ENCODE measurements at regions of chr1 and their contacts with region 1.

Region 1: GRCh38 chr1:94934551-94934950 is 7.6 kb upstream of the CNN3 start:
- DNase-seq: no peak
- H3K4me3 ChIP-seq: no peak overlapping the region
- H3K4me3 Mint-ChIP-seq: no peak overlapping the region
- H3K27ac ChIP-seq: no peak overlapping the region
- H3K27ac Mint-ChIP-seq: no peak overlapping the region
- H3K4me1 ChIP-seq: no peaks in the 10 kb centered on the region
- H3K4me1 Mint-ChIP-seq: no peaks in the 10 kb centered on the region
- H3K27me3 ChIP-seq: peaks cover under 1 to 4% of the 10 kb centered on the region in 2 donors
- H3K27me3 Mint-ChIP-seq: peaks cover 8 to 17% (median 11%) of the 10 kb centered on the region in 3 donors
- CTCF ChIP-seq: no peak

Region 2: DNA sequence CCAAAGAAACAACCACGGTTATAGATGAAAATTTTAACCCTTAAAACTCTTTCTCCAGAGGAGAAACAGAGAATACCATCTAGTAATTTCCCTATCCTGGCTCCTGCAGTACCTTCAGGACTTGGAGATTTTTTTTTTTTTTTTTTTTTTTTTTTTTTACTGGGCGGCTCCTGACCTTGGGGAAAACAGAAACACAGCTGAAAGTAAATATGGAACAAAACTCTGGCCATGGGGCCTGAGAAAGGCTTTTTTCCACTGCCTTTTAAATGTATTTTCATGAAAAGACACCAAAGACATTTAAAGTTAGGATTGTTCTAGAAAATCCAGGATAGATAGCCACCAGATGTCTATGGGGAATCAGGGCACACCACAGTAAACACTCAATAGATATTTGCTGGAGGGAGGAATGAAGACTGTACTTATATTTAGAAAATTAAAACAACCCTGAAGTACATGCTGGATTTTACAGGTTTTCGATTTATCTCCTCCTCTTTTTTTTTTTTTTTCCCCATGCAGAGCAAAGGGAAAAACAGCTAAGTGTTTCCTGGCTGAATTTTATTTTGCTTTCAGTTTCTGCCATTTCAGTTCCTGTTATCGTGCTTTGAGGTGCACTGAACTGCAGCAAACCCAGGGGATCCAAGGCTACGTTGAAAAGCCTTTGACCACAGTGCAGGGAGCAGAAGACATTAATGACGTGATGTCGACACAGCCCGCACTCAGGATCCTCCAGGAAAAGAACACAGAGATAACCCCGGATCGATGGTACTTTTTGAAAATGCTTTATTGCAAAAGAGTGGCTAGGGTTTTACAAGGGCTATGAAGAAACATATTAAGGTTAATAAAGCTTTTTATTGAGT is 28.1 kb after region 1 on chr1:
- intact Hi-C with region 1: loop called in 1 of 2 experiments (anchors 2 kb)
- DNase-seq: peak; percentile 20 to 56 (median 46)
- H3K4me3 ChIP-seq: peak overlapping the region; percentile 35 to 73 (median 67)
- H3K4me3 Mint-ChIP-seq: peak overlapping the region; percentile 76 to 96
- H3K27ac ChIP-seq: peak overlapping the region in 1 of 2 donors; percentile 79
- H3K27ac Mint-ChIP-seq: peak overlapping the region; percentile 8 to 95 (median 83)
- H3K4me1 ChIP-seq: peaks cover 11 to 13% of the 10 kb centered on the region in 2 donors
- H3K4me1 Mint-ChIP-seq: peaks cover 18% of the 10 kb centered on the region
- H3K27me3 ChIP-seq: no peaks in the 10 kb centered on the region
- H3K27me3 Mint-ChIP-seq: peaks cover 0 to 1% (median 0%) of the 10 kb centered on the region in 3 donors
- CTCF ChIP-seq: no peak